Activated CD4-positive, alpha-beta memory T cell treated with anti-CD3 and anti-CD28 coated beads, Interleukin-2, amount 10 ng/mL, durations not matched to agents 7 days and 5 days (primary cell): ENCODE measurements at regions of chr10 and their contacts with region 1.

Region 1: GRCh38 chr10:119131512-119132240 is 27.8 kb downstream of the DENND10 start:
- DNase-seq: peak; percentile 72
- H3K4me3 Mint-ChIP-seq: peak overlapping the region; percentile 73
- H3K27ac Mint-ChIP-seq: peak overlapping the region; percentile 98
- H3K4me1 Mint-ChIP-seq: peaks cover 67% of the 10 kb centered on the region
- H3K27me3 Mint-ChIP-seq: no peaks in the 10 kb centered on the region

Region 2: GRCh38 chr10:118958984-118959916 is 172.4 kb before region 1 on chr10:
- CTCF ChIA-PET with region 1: no interaction called
- POLR2A ChIA-PET with region 1: no interaction called
- DNase-seq: peak; percentile 24
- H3K4me3 Mint-ChIP-seq: no peak overlapping the region
- H3K27ac Mint-ChIP-seq: no peak overlapping the region
- H3K4me1 Mint-ChIP-seq: peaks cover 7% of the 10 kb centered on the region
- H3K27me3 Mint-ChIP-seq: peaks cover 11% of the 10 kb centered on the region

Region 3: GRCh38 chr10:119090968-119091367 is 40.7 kb before region 1 on chr10:
- CTCF ChIA-PET with region 1: interaction called, 8 read pairs
- POLR2A ChIA-PET with region 1: interaction called, 98 read pairs
- DNase-seq: peak; percentile 73
- H3K4me3 Mint-ChIP-seq: peak overlapping the region; percentile 54
- H3K27ac Mint-ChIP-seq: peak overlapping the region; percentile 100
- H3K4me1 Mint-ChIP-seq: peaks cover 71% of the 10 kb centered on the region
- H3K27me3 Mint-ChIP-seq: no peaks in the 10 kb centered on the region

Region 4: GRCh38 chr10:119113751-119114732 is 17.6 kb before region 1 on chr10:
- CTCF ChIA-PET with region 1: interaction called, 13 read pairs
- POLR2A ChIA-PET with region 1: interaction called, 12 read pairs
- DNase-seq: no peak
- H3K4me3 Mint-ChIP-seq: no peak overlapping the region
- H3K27ac Mint-ChIP-seq: no peak overlapping the region
- H3K4me1 Mint-ChIP-seq: peaks cover 22% of the 10 kb centered on the region
- H3K27me3 Mint-ChIP-seq: no peaks in the 10 kb centered on the region

Region 5: GRCh38 chr10:119165171-119166110 is 33.8 kb after region 1 on chr10 and contains the start of gene SFXN4:
- CTCF ChIA-PET with region 1: interaction called, 7 read pairs
- POLR2A ChIA-PET with region 1: interaction called, 38 read pairs
- DNase-seq: peak; percentile 85
- H3K4me3 Mint-ChIP-seq: peak within 1 kb of the TSS; percentile 88
- H3K27ac Mint-ChIP-seq: peak within 1 kb of the TSS; percentile 90
- H3K4me1 Mint-ChIP-seq: peaks cover 44% of the 10 kb centered on the region
- H3K27me3 Mint-ChIP-seq: no peaks in the 10 kb centered on the region
- total RNA-seq, gene SFXN4: 19.6 to 22.6 TPM

Region 6: DNA sequence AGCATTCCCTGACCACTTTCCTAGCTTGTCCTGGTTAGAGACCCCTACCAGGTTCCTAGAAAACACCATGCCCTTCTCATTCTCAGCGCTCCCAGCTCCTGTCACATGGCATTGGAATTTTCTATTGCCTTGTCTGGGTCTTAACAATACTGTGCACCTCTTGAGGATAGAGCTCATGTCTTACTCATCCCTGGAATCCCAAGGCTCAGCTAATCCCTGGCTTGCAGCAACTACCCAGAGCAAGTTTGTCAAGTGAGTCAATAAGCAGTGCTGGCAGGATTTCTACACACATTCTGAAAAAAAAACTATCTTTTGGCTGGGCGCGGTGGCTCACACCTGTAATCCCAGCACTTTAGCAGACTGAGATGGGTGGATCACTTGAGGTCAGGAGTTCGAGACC is 58.7 kb after region 1 on chr10:
- CTCF ChIA-PET with region 1: no interaction called
- POLR2A ChIA-PET with region 1: no interaction called
- DNase-seq: no peak
- H3K4me3 Mint-ChIP-seq: no peak overlapping the region
- H3K27ac Mint-ChIP-seq: no peak overlapping the region
- H3K4me1 Mint-ChIP-seq: peaks cover 21% of the 10 kb centered on the region
- H3K27me3 Mint-ChIP-seq: peaks cover 5% of the 10 kb centered on the region